ENCODE measurements at regions of chr4 and their contacts with region 1.

Region 1: DNA sequence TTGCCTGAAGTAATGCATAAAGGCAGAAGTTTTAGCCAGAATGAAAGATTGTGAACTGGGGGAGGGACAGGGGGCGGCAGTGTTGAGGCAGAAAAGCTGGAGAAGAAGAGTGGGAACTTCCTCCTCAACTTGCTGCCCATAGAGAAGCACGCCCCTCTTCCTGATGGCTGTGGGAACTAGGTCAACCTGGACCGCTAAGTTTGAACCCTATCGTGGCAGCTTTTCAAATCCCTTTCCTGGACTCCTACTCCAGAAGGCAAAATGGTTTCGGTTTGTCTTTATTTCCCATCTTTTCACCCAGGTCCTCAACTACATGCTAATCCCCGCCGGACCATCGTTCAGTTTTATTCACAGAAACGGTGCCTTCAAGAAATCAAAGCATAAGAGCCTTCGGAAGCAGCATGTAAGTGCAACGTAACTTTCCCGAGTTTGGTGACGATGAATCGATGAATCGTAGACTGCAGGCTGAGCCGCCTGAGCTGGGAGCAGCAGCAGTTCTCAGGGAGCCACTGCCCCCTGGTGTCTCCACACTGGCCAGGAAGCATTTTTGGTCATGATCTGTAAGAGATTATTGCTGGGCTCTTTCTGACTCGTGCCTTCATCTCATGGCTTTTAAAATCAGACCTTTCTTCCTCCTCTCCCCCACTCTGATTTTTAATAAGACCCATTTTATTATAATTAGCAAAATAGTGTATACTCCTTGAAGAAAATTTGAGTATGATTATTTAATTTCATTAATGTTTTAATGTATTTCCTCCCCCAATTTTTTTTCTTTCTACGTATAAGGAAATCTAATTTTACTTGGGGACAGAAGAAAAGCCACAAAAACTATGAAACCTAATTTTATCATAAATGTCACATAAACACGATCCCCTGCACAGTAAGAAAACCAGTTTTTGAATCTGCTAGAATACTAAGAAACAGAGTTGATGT is 21.4 kb downstream of the SPINK2 start:
- DNase-seq: peak; percentile 79
- ATAC-seq: peak; percentile 96
- H3K4me3 ChIP-seq: peak overlapping the region; percentile 66 to 72
- H3K27ac ChIP-seq: peak overlapping the region; percentile 25
- H3K4me1 ChIP-seq: peaks cover 0 to 6% of the 10 kb centered on the region in 2 experiments; a peak in 2 of 4 replicates
- H3K27me3 ChIP-seq: no peaks in the 10 kb centered on the region
- CTCF ChIP-seq: peak; percentile 89 to 90 (median 89)
- POLR2A ChIP-seq: no peak
- RAD21 ChIP-seq: peak; percentile 97

Region 2: GRCh38 chr4:56424697-56425514 is 375.2 kb before region 1 on chr4:
- CTCF ChIA-PET with region 1: interaction called, 4 read pairs
- POLR2A ChIA-PET with region 1: no interaction called
- RAD21 ChIA-PET with region 1: no interaction called
- intact Hi-C with region 1: loop called (anchors 5 kb)
- DNase-seq: no peak
- ATAC-seq: no peak
- H3K4me3 ChIP-seq: no peak overlapping the region
- H3K27ac ChIP-seq: no peak overlapping the region
- H3K4me1 ChIP-seq: no peaks in the 10 kb centered on the region
- H3K27me3 ChIP-seq: no peaks in the 10 kb centered on the region
- CTCF ChIP-seq: peak; percentile 38 to 73 (median 67); a peak in 5 of 6 replicates
- POLR2A ChIP-seq: no peak
- RAD21 ChIP-seq: peak; percentile 47

Region 3: DNA sequence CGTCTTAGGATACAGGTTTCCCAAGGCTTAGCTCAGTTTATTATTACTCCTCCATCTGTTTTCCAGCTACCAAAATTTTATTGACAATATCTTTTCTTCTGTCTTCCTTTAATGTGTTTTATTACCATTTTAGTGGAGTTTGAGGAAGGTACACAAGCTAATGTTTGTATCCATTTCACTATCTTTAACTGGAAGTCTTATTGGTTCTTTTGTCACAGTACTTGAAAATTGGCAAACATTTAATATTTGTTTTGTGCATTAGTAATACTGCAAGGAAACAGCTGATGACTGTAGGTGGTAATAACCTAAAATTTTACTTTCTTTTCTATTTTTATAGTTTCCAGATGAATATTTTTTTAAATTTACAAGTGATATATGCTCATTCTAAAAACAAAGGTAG is 303.8 kb before region 1 on chr4:
- CTCF ChIA-PET with region 1: no interaction called
- POLR2A ChIA-PET with region 1: no interaction called
- RAD21 ChIA-PET with region 1: no interaction called
- intact Hi-C with region 1: no loop called
- DNase-seq: no peak
- ATAC-seq: no peak
- H3K4me3 ChIP-seq: no peak overlapping the region
- H3K27ac ChIP-seq: no peak overlapping the region
- H3K4me1 ChIP-seq: no peaks in the 10 kb centered on the region
- H3K27me3 ChIP-seq: no peaks in the 10 kb centered on the region
- CTCF ChIP-seq: no peak
- POLR2A ChIP-seq: no peak
- RAD21 ChIP-seq: no peak

Region 4: GRCh38 chr4:56544573-56545131 is 255.4 kb before region 1 on chr4:
- CTCF ChIA-PET with region 1: interaction called, 13 read pairs
- POLR2A ChIA-PET with region 1: no interaction called
- RAD21 ChIA-PET with region 1: no interaction called
- intact Hi-C with region 1: no loop called
- DNase-seq: peak; percentile 80
- ATAC-seq: peak; percentile 98
- H3K4me3 ChIP-seq: peak overlapping the region; percentile 34 to 57
- H3K27ac ChIP-seq: no peak overlapping the region
- H3K4me1 ChIP-seq: peaks cover 0 to 11% of the 10 kb centered on the region in 2 experiments; a peak in 1 of 4 replicates
- H3K27me3 ChIP-seq: no peaks in the 10 kb centered on the region
- CTCF ChIP-seq: peak; percentile 97 to 99 (median 98)
- POLR2A ChIP-seq: no peak
- RAD21 ChIP-seq: peak; percentile 94

Region 5: GRCh38 chr4:56575820-56576429 is 224.2 kb before region 1 on chr4:
- CTCF ChIA-PET with region 1: interaction called, 29 read pairs
- POLR2A ChIA-PET with region 1: interaction called, 3 read pairs
- RAD21 ChIA-PET with region 1: interaction called, 5 to 7 read pairs
- intact Hi-C with region 1: loop called (anchors 1 kb)
- DNase-seq: peak; percentile 36
- ATAC-seq: peak; percentile 77; the same call in 1 of the 2 replicates
- H3K4me3 ChIP-seq: no peak overlapping the region
- H3K27ac ChIP-seq: no peak overlapping the region
- H3K4me1 ChIP-seq: no peaks in the 10 kb centered on the region
- H3K27me3 ChIP-seq: no peaks in the 10 kb centered on the region
- CTCF ChIP-seq: peak; percentile 47 to 64 (median 58); a peak in 4 of 6 replicates
- POLR2A ChIP-seq: no peak
- RAD21 ChIP-seq: peak; percentile 71

Region 6: DNA sequence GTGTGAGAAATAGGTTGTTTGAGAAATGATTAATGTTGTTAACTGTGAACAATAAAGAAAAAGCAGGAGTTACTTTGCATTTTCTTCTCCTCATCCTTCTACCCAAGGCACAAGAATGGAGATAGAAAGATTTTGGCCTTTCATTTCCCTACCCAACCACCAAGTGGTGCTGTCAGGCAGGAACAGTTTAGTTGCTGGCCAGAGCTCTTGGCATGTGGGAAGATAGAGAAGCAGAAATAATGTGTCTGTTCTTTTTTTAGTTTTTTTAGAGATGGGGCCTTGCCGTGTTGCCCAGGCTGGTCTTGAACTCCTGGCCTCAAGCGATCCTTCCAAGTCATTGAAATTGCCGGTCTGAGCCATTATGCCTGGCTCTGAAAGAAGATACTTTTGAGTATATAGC is 131.8 kb before region 1 on chr4:
- CTCF ChIA-PET with region 1: interaction called, 4 read pairs
- POLR2A ChIA-PET with region 1: no interaction called
- RAD21 ChIA-PET with region 1: interaction called, 3 to 4 read pairs
- intact Hi-C with region 1: loop called (anchors 1 kb)
- DNase-seq: peak; percentile 8
- ATAC-seq: 0 out of 2 replicates have a peak, but pooled peaks have one; percentile 46
- H3K4me3 ChIP-seq: no peak overlapping the region
- H3K27ac ChIP-seq: no peak overlapping the region
- H3K4me1 ChIP-seq: peaks cover 0 to 4% of the 10 kb centered on the region in 2 experiments; a peak in 1 of 4 replicates
- H3K27me3 ChIP-seq: no peaks in the 10 kb centered on the region
- CTCF ChIP-seq: peak; percentile 42 to 61 (median 60); a peak in 5 of 6 replicates
- POLR2A ChIP-seq: no peak
- RAD21 ChIP-seq: peak; percentile 68

Region 7: DNA sequence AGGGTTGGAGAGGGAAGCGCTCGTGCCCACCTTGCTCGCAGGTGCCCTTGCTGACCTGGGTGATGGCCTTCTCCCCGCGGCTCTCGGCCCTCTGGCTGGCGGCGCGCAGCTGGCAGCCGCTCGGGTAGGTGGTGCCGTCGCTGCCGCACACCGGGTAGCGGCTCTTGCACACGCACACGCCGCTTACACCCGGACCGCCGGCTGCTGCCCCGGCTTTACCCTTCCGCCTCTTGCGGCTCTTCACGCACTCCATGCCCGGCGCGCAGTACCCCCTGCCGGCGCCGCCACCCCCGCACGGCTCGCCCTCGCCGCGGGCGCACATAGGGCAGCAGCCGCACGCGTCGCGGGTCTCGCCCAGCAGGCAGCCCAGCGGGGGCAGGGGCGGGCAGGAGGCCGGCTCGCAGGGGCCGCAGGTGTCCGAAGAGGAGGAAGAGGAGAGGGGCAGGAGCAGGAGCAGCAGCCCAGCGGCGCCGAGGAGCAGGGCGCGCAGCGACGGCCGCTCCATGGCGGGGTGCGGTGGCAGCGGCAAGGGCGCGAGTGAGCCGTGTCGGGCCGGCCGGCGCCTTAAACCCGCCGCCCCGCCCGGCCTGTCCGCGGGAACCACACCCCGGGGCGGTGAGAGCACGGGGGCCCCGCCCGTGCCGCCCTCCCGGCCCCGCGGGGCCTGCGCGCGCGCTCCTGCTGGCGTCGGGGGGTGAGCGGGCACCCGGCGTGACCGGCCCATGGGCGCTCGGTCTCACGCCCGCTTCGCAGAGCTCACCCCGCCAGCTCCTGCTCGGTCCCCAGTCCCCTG is 310.0 kb after region 1 on chr4 and contains the start of gene IGFBP7:
- CTCF ChIA-PET with region 1: no interaction called
- POLR2A ChIA-PET with region 1: no interaction called
- RAD21 ChIA-PET with region 1: no interaction called
- intact Hi-C with region 1: no loop called
- DNase-seq: no peak
- ATAC-seq: no peak
- H3K4me3 ChIP-seq: no peak within 1 kb of the TSS
- H3K27ac ChIP-seq: no peak within 1 kb of the TSS
- H3K4me1 ChIP-seq: no peaks in the 10 kb centered on the region
- H3K27me3 ChIP-seq: peaks cover 10% of the 10 kb centered on the region; the same call in 1 of the 2 replicates
- CTCF ChIP-seq: no peak
- POLR2A ChIP-seq: no peak
- RAD21 ChIP-seq: no peak
- total RNA-seq, gene IGFBP7: 0.91 TPM

Region 8: DNA sequence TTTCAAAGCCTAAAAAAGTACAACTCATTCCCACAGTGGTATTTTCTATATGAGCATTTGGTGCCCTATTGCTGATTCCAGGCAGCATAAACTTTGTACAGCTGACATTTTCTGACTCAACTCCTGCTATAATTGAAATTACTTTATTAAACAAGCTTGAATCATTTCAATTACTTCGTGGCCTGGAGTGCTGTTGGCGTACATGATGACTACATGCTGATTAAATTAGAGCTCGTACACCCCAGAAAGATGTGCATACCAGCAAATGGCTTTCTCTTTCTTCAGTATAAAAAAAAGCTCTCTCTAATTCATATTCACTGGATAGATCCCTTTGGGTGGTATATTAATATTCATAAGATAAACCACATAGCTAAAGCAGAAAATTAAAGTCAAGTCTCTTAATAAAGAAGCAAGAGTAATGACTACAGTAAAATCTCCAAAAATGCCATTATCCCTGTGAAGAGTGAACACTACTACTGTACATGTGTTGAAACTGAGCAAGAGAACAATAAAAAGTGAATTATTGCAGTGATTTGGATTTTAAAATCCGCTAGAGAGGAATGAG is 555.1 kb after region 1 on chr4:
- CTCF ChIA-PET with region 1: no interaction called
- POLR2A ChIA-PET with region 1: no interaction called
- RAD21 ChIA-PET with region 1: no interaction called
- intact Hi-C with region 1: no loop called
- DNase-seq: no peak
- ATAC-seq: no peak
- H3K4me3 ChIP-seq: no peak overlapping the region
- H3K27ac ChIP-seq: no peak overlapping the region
- H3K4me1 ChIP-seq: no peaks in the 10 kb centered on the region
- H3K27me3 ChIP-seq: no peaks in the 10 kb centered on the region
- CTCF ChIP-seq: no peak
- POLR2A ChIP-seq: no peak
- RAD21 ChIP-seq: no peak

Measured in HCT116 (cell line).